ENCODE measurements at regions of chr6 and their contacts with region 1.

Region 1: DNA sequence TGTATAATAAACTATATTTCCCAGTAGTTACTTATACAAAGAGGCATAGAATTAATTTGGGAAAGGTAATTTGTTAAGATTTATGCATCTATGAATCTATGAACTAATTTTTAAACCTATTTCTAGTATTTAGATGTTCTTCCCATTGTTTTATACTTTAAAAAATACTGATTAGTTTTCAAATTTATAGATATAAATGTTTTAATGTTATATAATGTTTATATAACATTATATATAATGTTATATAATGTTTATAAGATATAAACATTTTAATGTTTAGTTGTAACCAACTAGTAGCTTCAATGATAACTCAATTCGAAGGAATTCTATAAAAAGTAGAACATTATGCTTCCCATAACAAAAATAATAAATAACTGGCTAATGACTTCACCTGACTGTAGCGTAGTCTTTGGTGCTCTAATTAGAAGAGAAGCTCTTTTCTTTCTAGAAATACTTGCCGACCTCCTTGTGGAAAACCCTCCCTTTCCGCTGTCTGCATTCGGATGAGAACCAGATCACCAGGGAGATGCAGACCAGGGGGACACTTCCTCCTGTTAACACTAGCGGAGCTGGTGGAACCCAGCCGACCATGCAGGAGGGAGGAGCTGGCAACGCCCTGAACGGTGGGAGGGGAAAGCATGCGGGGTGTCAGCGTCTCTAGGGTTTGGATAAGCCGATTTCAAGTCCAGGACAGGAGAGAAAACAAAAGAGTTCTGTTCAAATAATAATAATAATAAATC is 158.4 kb downstream of the OR2B2 start:
- DNase-seq: no peak

Region 2: GRCh38 chr6:27177485-27178406 is 576.1 kb before region 1 on chr6:
- intact Hi-C with region 1: loop called (anchors 1 kb)
- DNase-seq: peak; percentile 84

Region 3: GRCh38 chr6:27518881-27519795 is 234.7 kb before region 1 on chr6:
- intact Hi-C with region 1: loop called (anchors 2 kb)
- DNase-seq: no peak

Measured in cardiac septum (tissue), 1 donor.